ENCODE measurements at regions of chr20 and their contacts with region 1.

Region 1: DNA sequence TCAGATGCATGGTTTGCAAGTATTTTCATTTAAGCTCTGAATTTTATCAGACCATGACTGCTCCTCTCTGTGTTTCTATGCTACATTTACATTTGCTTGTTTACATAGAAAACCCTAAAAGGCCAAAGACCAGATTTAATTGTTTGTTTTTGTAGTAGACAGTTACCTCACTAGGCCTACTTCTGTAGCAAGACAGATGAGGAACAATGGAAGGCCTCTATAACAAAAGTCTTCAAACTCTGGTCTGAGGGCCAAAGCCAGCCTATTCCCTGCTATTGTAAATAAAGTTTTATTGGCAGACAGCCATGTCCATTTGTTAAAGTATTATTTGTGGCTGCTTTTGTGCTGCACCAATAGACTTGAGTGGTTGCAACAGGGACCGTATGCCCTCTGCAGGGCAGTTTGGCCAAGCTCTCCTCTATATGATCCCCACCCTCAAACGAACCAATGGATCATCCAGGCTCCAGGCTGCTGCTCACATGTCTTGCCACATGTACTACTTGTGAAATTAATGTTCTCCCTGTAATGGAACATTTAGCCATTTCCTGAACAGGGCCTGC is 182.0 kb downstream of the DOK5 start:
- DNase-seq: no peak
- H3K4me3 ChIP-seq: no peak overlapping the region
- H3K27ac ChIP-seq: no peak overlapping the region
- H3K4me1 ChIP-seq: no peaks in the 10 kb centered on the region
- H3K27me3 ChIP-seq: no peaks in the 10 kb centered on the region
- CTCF ChIP-seq: no peak
- EP300 ChIP-seq: no peak
- RAD21 ChIP-seq: no peak

Region 2: DNA sequence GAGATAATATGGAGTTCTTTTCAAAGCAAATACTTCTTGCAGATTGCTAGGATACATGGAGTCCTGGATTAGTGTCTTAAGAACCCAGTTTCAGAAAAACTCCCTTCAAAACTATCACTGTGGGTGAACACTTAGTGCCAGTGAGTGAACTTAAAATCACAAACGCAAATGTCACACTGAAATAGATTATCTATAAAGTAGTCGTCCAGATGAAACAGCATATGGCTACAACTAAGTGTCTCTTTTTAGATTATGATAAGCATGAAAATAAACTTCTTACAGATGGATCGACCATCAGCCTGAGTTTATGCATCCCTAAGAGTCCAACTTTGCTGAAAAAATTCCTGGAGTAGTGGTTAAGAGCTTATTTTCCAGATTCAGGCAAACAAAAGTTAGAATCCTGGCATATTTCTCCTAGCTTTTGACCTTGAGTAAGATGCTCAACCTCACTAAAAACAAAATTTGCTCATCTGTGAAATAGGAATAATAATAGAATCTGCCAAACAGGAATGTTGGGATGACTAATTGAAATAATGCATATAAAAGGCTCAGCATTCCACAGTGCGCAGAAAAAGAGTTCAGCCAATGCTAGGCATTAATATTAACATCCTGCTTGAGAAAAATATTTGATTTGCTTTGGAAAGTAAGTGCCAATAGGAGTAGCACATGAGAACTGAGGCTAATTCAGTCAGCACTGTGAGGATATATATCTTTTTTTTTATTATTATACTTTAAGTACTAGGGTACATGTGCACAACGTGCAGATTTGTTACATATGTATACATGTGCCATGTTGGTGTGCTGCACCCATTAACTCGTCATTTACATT is 111.4 kb before region 1 on chr20:
- CTCF ChIA-PET with region 1: no interaction called
- POLR2A ChIA-PET with region 1: no interaction called
- DNase-seq: no peak
- H3K4me3 ChIP-seq: no peak overlapping the region
- H3K27ac ChIP-seq: peak overlapping the region; percentile 34 to 60; a peak in 3 of 4 replicates
- H3K4me1 ChIP-seq: peaks cover 0 to 12% of the 10 kb centered on the region in 2 experiments; a peak in 1 of 4 replicates
- H3K27me3 ChIP-seq: no peaks in the 10 kb centered on the region
- CTCF ChIP-seq: no peak
- EP300 ChIP-seq: no peak
- RAD21 ChIP-seq: no peak

Region 3: GRCh38 chr20:54668271-54669039 is 11.1 kb after region 1 on chr20:
- CTCF ChIA-PET with region 1: interaction called, 28 read pairs
- POLR2A ChIA-PET with region 1: no interaction called
- DNase-seq: peak; percentile 29
- H3K4me3 ChIP-seq: no peak overlapping the region; a peak in 1 of 4 replicates
- H3K27ac ChIP-seq: no peak overlapping the region
- H3K4me1 ChIP-seq: no peaks in the 10 kb centered on the region
- H3K27me3 ChIP-seq: no peaks in the 10 kb centered on the region
- CTCF ChIP-seq: peak; percentile 75
- EP300 ChIP-seq: no peak
- RAD21 ChIP-seq: peak; percentile 58

Region 4: GRCh38 chr20:54726768-54727422 is 69.5 kb after region 1 on chr20:
- CTCF ChIA-PET with region 1: no interaction called
- POLR2A ChIA-PET with region 1: no interaction called
- DNase-seq: no peak
- H3K4me3 ChIP-seq: no peak overlapping the region
- H3K27ac ChIP-seq: no peak overlapping the region
- H3K4me1 ChIP-seq: no peaks in the 10 kb centered on the region
- H3K27me3 ChIP-seq: no peaks in the 10 kb centered on the region
- CTCF ChIP-seq: no peak
- EP300 ChIP-seq: no peak
- RAD21 ChIP-seq: peak; percentile 24; the same call in 1 of the 2 replicates

Region 5: DNA sequence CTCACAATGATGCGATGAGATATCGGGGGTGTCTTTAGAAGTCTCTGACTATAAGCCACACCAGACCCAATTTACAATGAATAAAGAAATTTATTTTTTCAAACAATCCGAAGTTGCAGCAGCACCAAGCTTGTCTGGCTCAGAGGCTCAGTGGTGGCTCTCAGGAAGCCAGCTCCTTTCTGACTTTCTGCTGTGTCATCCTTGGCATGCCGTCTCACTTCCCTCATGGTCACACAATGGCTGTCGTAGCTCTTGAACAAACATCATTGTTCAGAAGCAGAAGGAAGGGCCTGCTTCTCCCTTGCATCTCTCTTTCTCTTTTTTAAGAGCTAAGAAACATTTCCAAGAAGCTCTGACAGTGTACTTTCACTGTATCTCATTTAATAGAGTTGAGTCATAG is 117.1 kb after region 1 on chr20:
- CTCF ChIA-PET with region 1: no interaction called
- POLR2A ChIA-PET with region 1: no interaction called
- DNase-seq: no peak
- H3K4me3 ChIP-seq: no peak overlapping the region
- H3K27ac ChIP-seq: no peak overlapping the region
- H3K4me1 ChIP-seq: no peaks in the 10 kb centered on the region
- H3K27me3 ChIP-seq: no peaks in the 10 kb centered on the region
- CTCF ChIP-seq: no peak
- EP300 ChIP-seq: no peak
- RAD21 ChIP-seq: no peak

Measured in SK-N-SH (cell line).